Motor neuron (in vitro differentiated cells): ENCODE measurements at regions of chr17 and their contacts with region 1.

Region 1: DNA sequence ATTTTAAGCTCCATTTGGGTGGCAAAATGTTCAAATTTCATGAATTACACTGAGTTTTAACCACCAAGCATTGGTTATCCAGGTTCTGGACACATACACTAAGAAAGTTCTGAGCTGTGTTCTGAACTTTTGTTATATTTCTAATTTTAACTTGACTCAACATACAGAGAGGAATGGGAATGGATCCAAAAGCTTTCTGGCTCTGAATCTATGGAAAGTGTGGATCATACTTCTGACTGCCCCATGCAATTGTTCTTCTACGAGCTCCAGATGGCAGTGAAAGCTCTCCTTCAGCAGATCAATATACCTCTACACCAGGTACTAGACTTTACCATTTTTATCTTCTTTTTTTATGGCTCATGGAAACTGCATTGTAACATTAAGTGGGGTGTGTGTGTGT is 113.0 kb upstream of the NOG start:
- ATAC-seq: no peak
- H3K4me3 ChIP-seq: no peak overlapping the region
- H3K27ac ChIP-seq: no peak overlapping the region
- H3K4me1 ChIP-seq: peaks cover 5 to 6% of the 10 kb centered on the region in 2 donors

Region 2: GRCh38 chr17:56125830-56126819 is 354.4 kb before region 1 on chr17:
- in situ Hi-C with region 1: loop called in 1 of 9 experiments (anchors 10 kb)
- ATAC-seq: peak in 4 of 8 experiments; percentile 13 to 55 (median 26)
- H3K4me3 ChIP-seq: no peak overlapping the region
- H3K27ac ChIP-seq: no peak overlapping the region
- H3K4me1 ChIP-seq: peaks cover 11 to 13% of the 10 kb centered on the region in 2 donors

Region 3: GRCh38 chr17:56866496-56866895 is 386.0 kb after region 1 on chr17:
- in situ Hi-C with region 1: no loop called
- ATAC-seq: peak in 2 of 8 experiments; percentile 16 to 49
- H3K4me3 ChIP-seq: no peak overlapping the region
- H3K27ac ChIP-seq: no peak overlapping the region
- H3K4me1 ChIP-seq: no peaks in the 10 kb centered on the region

Region 4: DNA sequence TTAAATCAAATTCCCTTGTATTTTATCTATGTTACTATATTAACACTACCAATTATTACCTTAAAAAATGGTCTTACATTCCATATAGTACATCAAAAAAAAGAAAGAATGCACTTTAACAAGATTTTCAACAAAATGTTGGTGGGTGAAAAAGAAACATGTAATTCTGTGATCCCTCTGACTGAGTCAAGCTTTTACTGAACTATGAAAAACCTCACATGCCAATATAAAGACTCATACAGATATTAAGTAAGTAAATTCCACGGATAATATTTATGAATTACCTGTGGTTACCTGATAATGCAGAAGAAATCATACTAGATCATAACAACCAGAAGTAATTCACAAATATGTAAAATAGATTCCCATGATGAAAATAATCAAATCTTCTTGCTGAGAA is 468.0 kb after region 1 on chr17:
- in situ Hi-C with region 1: no loop called
- ATAC-seq: no peak
- H3K4me3 ChIP-seq: no peak overlapping the region
- H3K27ac ChIP-seq: no peak overlapping the region
- H3K4me1 ChIP-seq: no peaks in the 10 kb centered on the region